ENCODE measurements at regions of chr3 and their contacts with region 1.

Region 1: DNA sequence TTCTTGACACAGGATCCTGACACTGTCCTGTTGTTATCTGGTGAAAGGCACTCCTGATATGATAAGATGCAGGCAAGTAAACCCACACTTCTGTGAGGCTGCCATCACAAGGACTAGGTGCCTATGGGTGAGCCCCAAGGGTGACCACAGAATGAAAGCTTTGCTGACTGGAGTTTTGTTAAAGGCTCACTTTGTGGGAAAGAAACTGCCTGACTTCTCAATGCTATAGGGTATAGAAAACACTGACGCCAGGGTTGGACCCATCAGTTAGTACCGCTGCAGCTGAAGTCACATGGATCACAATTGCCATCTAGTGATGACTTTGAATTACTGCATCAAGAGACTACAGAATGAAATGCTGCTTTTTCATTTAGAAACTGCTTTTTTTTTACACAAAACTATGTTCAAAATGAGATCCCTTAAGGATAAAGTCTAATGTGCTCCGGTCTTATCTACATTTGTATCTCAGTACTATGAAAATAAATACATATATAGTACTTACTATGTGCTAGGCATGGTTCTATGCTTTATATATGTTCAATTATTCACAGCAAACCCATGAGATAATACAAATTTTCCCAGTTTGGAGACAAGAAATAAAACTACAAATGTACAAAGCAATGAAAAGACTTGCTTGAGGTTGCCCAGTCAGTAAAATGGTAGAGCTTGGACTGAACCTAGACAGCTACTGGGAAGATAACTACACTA is 64.2 kb upstream of the CMSS1 start:
- DNase-seq: peak; percentile 68
- H3K4me3 Mint-ChIP-seq: no peak overlapping the region
- H3K27ac Mint-ChIP-seq: no peak overlapping the region
- H3K4me1 Mint-ChIP-seq: no peaks in the 10 kb centered on the region
- H3K27me3 Mint-ChIP-seq: peaks cover 26% of the 10 kb centered on the region

Region 2: DNA sequence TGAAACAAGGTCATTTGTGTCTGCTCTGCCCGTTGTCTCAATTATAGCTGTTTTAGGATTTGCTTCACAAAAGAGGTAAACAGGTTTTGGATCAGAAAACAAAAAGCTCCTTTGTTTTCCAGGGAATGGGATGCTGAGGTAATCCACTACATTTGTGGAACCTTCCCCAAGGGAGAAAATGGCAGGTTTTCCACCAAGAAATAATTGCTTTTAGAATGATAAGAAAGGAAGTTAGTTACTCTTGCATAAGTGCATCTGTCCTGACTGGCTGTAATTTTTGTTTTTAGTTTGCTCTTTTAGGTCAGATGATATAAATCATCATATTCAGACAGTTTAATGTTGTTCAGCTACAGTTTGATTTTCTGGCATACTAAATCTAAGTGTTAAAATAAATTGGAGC is 313.5 kb before region 1 on chr3:
- intact Hi-C with region 1: no loop called
- DNase-seq: no peak
- H3K4me3 Mint-ChIP-seq: no peak overlapping the region
- H3K27ac Mint-ChIP-seq: no peak overlapping the region
- H3K4me1 Mint-ChIP-seq: no peaks in the 10 kb centered on the region
- H3K27me3 Mint-ChIP-seq: no peaks in the 10 kb centered on the region

Region 3: GRCh38 chr3:99499235-99500158 is 253.9 kb before region 1 on chr3:
- intact Hi-C with region 1: loop called (anchors 1 kb)
- DNase-seq: no peak
- H3K4me3 Mint-ChIP-seq: no peak overlapping the region
- H3K27ac Mint-ChIP-seq: no peak overlapping the region
- H3K4me1 Mint-ChIP-seq: no peaks in the 10 kb centered on the region
- H3K27me3 Mint-ChIP-seq: peaks cover 2% of the 10 kb centered on the region

Region 4: DNA sequence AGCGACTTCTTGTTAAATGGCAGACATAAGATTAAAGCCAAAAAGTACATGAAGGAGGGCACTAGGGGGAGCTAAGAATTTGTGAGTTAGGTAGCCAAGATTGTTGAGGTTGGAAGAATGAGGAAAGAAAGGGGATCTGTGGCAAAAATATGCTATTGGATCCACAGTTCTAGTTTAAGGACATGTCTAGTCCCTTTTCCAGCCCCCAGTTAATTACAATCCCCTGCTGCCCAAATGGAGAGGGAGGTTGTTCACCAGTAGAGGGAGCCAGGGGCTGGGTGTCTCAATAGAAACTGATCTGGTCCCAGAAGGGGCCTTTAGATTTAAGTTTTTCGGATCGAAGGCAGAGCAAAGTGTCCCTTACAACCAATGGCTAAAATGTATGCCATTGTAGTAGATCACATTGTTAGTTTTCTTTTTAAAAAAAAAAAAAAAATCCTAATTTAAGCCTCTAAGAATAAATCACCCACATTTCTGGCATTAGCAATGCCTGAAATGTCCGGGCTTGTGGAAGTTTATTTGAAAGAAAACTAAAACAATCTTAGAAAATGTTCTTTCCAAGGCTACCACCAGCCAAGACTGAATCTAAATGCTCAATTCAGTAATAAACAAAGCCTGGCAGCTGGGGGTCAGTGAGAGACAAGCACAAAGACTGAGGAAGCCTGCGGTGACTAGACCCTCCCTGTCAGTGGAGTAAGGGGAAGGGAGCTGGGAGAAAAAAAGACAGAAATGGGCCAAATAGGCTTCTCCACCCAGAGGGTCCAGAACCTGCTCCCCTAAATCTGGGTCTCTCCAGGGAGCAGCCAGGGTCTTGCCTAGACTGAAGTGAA is 107.9 kb before region 1 on chr3:
- intact Hi-C with region 1: loop called (anchors 1 kb)
- DNase-seq: no peak
- H3K4me3 Mint-ChIP-seq: no peak overlapping the region
- H3K27ac Mint-ChIP-seq: no peak overlapping the region
- H3K4me1 Mint-ChIP-seq: no peaks in the 10 kb centered on the region
- H3K27me3 Mint-ChIP-seq: peaks cover 13% of the 10 kb centered on the region

Region 5: GRCh38 chr3:99659032-99659431 is 94.4 kb before region 1 on chr3:
- intact Hi-C with region 1: no loop called
- DNase-seq: no peak
- H3K4me3 Mint-ChIP-seq: no peak overlapping the region
- H3K27ac Mint-ChIP-seq: no peak overlapping the region
- H3K4me1 Mint-ChIP-seq: no peaks in the 10 kb centered on the region
- H3K27me3 Mint-ChIP-seq: no peaks in the 10 kb centered on the region

Measured in activated CD4-positive, alpha-beta T cell treated with anti-CD3 and anti-CD28 coated beads, Interleukin-2, amount 10 ng/mL, durations not matched to agents 24 days and 14 days (primary cell).